ENCODE measurements at regions of chr1 and their contacts with region 1.

Region 1: GRCh38 chr1:115168026-115168425 is 78.7 kb upstream of the TSPAN2 start:
- DNase-seq: no peak
- H3K4me3 Mint-ChIP-seq: no peak overlapping the region
- H3K27ac Mint-ChIP-seq: no peak overlapping the region
- H3K4me1 Mint-ChIP-seq: no peaks in the 10 kb centered on the region
- H3K27me3 Mint-ChIP-seq: peaks cover 5% of the 10 kb centered on the region

Region 2: GRCh38 chr1:115184951-115185331 is 16.9 kb after region 1 on chr1:
- intact Hi-C with region 1: loop called (anchors 2 kb)
- DNase-seq: no peak
- H3K4me3 Mint-ChIP-seq: peak overlapping the region; percentile 40
- H3K27ac Mint-ChIP-seq: peak overlapping the region; percentile 83
- H3K4me1 Mint-ChIP-seq: peaks cover 17% of the 10 kb centered on the region
- H3K27me3 Mint-ChIP-seq: no peaks in the 10 kb centered on the region